HCT116 (cell line): ENCODE measurements at regions of chr7 and their contacts with region 1.

Region 1: GRCh38 chr7:155961241-155962190 is 149.3 kb upstream of the SHH start:
- DNase-seq: peak; percentile 92
- ATAC-seq: peak; percentile 48
- H3K4me3 ChIP-seq: peak overlapping the region; percentile 41 to 55
- H3K27ac ChIP-seq: peak overlapping the region; percentile 95
- H3K4me1 ChIP-seq: peaks cover 66 to 79% of the 10 kb centered on the region in 2 experiments
- H3K27me3 ChIP-seq: no peaks in the 10 kb centered on the region
- CTCF ChIP-seq: no peak
- POLR2A ChIP-seq: no peak
- RAD21 ChIP-seq: no peak

Region 2: GRCh38 chr7:155815332-155816191 is 146.0 kb before region 1 on chr7:
- CTCF ChIA-PET with region 1: interaction called, 3 read pairs
- POLR2A ChIA-PET with region 1: interaction called, 3 read pairs
- RAD21 ChIA-PET with region 1: no interaction called
- intact Hi-C with region 1: loop called (anchors 5 kb)
- DNase-seq: no peak
- ATAC-seq: peak; percentile 97
- H3K4me3 ChIP-seq: no peak overlapping the region
- H3K27ac ChIP-seq: no peak overlapping the region
- H3K4me1 ChIP-seq: peaks cover 0 to 6% of the 10 kb centered on the region in 2 experiments; a peak in 2 of 4 replicates
- H3K27me3 ChIP-seq: 0 out of 2 replicates have a peak, but pooled peaks cover 5% of the 10 kb centered on the region
- CTCF ChIP-seq: peak; percentile 75 to 86 (median 83)
- POLR2A ChIP-seq: no peak
- RAD21 ChIP-seq: peak; percentile 98

Region 3: GRCh38 chr7:155930061-155930460 is 31.5 kb before region 1 on chr7:
- CTCF ChIA-PET with region 1: no interaction called
- POLR2A ChIA-PET with region 1: no interaction called
- RAD21 ChIA-PET with region 1: no interaction called
- intact Hi-C with region 1: no loop called
- DNase-seq: no peak
- ATAC-seq: no peak
- H3K4me3 ChIP-seq: no peak overlapping the region
- H3K27ac ChIP-seq: no peak overlapping the region
- H3K4me1 ChIP-seq: no peaks in the 10 kb centered on the region
- H3K27me3 ChIP-seq: no peaks in the 10 kb centered on the region
- CTCF ChIP-seq: no peak
- POLR2A ChIP-seq: no peak
- RAD21 ChIP-seq: no peak

Region 4: GRCh38 chr7:156096771-156097538 is 135.4 kb after region 1 on chr7:
- CTCF ChIA-PET with region 1: no interaction called
- POLR2A ChIA-PET with region 1: no interaction called
- RAD21 ChIA-PET with region 1: no interaction called
- intact Hi-C with region 1: no loop called
- DNase-seq: no peak
- ATAC-seq: no peak
- H3K4me3 ChIP-seq: no peak overlapping the region
- H3K27ac ChIP-seq: no peak overlapping the region
- H3K4me1 ChIP-seq: peaks cover 0 to 23% of the 10 kb centered on the region in 2 experiments; a peak in 2 of 4 replicates
- H3K27me3 ChIP-seq: no peaks in the 10 kb centered on the region
- CTCF ChIP-seq: no peak
- POLR2A ChIP-seq: no peak
- RAD21 ChIP-seq: no peak

Region 5: DNA sequence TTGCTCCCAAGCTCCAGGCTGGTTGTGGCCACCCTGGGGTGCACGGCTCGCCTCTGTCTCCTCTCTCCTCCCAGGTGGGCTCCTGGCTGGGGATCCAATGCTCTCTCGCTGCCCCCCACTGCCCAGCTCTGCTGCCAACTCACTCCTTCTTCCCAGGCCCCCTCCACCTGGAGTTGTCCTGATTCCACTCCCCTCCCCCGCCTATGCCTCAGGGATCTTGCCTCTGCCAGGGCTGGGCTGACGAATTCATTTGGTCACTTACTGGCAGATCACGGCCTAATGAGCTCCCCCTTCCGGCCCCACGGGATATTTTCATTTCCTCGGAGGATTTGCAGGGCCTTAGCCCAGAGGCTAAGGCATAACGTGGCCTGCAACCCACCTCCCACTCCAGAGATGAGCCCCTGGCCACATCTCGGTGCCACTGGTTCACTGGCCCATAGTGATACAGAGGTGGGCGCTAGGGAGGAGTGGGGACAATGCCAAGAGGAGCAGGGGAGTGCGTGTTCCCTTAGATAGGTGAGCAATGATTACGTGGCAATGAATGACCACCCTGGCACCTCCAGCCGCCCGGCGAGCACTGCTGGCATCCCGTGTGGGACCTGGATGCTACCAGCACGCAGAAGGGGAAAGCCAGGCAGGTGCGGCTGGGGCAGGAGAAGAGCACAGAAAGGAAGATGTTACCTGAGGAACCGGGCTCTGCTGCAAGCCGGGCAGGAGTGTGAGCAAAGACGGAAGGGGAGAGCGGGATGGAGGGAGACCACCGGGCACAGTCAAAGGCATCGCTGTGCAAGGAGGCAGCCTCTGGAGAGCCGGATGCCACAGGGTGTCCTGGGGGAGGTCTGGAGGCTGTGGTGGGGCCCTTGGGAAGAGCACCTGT is 195.5 kb after region 1 on chr7:
- CTCF ChIA-PET with region 1: no interaction called
- POLR2A ChIA-PET with region 1: interaction called, 4 read pairs
- RAD21 ChIA-PET with region 1: no interaction called
- intact Hi-C with region 1: loop called (anchors 5 kb)
- DNase-seq: peak; percentile 54
- ATAC-seq: peak; percentile 83
- H3K4me3 ChIP-seq: no peak overlapping the region
- H3K27ac ChIP-seq: no peak overlapping the region; the same call in 1 of the 2 replicates
- H3K4me1 ChIP-seq: peaks cover 6 to 16% of the 10 kb centered on the region in 2 experiments; a peak in 3 of 4 replicates
- H3K27me3 ChIP-seq: no peaks in the 10 kb centered on the region
- CTCF ChIP-seq: peak; percentile 39 to 67 (median 57); a peak in 5 of 6 replicates
- POLR2A ChIP-seq: no peak
- RAD21 ChIP-seq: peak; percentile 80

Region 6: GRCh38 chr7:156640257-156640948 is 678.9 kb after region 1 on chr7 and contains the start of gene RNF32:
- CTCF ChIA-PET with region 1: no interaction called
- POLR2A ChIA-PET with region 1: no interaction called
- RAD21 ChIA-PET with region 1: no interaction called
- intact Hi-C with region 1: loop called (anchors 10 kb)
- DNase-seq: peak; percentile 82
- ATAC-seq: peak; percentile 89
- H3K4me3 ChIP-seq: peak within 1 kb of the TSS; percentile 68 to 78
- H3K27ac ChIP-seq: peak within 1 kb of the TSS; percentile 74
- H3K4me1 ChIP-seq: peaks cover 4 to 19% of the 10 kb centered on the region in 2 experiments; a peak in 3 of 4 replicates
- H3K27me3 ChIP-seq: no peaks in the 10 kb centered on the region
- CTCF ChIP-seq: no peak
- POLR2A ChIP-seq: no peak
- RAD21 ChIP-seq: no peak
- total RNA-seq, gene RNF32: 3.4 TPM

Region 7: DNA sequence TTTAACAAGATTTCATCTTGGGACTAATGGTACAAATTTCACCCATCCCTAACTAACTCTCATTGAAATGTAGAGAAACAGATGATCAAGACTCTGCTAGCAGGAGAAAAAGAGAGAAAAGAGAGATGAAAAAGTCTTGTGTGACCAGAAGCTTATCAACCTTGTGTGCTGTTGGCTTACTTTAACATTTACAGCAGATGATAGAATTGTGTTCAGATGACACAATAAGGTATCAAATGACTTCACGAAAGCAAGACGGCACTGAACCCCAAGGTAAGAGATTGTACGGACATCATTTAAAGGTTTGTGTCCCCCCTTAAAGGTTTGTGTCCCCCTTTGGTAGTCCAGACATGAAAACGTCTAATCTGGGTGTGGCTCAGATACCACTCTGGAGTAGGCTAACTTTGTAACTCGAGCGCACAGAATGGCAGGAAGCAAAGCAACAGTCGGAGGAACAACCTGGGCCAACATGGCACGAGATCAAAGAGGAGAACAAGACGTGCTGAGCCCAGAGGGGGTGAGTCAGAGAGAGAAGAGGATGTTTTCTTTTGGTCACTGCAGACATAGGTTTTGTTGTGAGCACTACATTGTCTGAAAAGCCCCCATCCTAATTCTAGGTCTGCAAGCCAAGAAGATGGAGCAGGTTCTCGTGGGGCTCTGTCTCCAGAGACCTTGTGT is 941.9 kb after region 1 on chr7:
- CTCF ChIA-PET with region 1: no interaction called
- POLR2A ChIA-PET with region 1: no interaction called
- RAD21 ChIA-PET with region 1: no interaction called
- intact Hi-C with region 1: loop called (anchors 5 kb)
- DNase-seq: peak; percentile 89
- ATAC-seq: peak; percentile 91
- H3K4me3 ChIP-seq: peak overlapping the region; percentile 8 to 45
- H3K27ac ChIP-seq: peak overlapping the region; percentile 54
- H3K4me1 ChIP-seq: peaks cover 30 to 61% of the 10 kb centered on the region in 2 experiments
- H3K27me3 ChIP-seq: no peaks in the 10 kb centered on the region
- CTCF ChIP-seq: no peak
- POLR2A ChIP-seq: no peak
- RAD21 ChIP-seq: no peak